Activated CD4-positive, alpha-beta memory T cell treated with anti-CD3 and anti-CD28 coated beads for 36 hours (primary cell): ENCODE measurements at regions of chr1 and their contacts with region 1.

Region 1: GRCh38 chr1:147640553-147641165 is 29.7 kb downstream of the ACP6 start:
- DNase-seq: peak; percentile 87
- H3K4me3 Mint-ChIP-seq: no peak overlapping the region
- H3K27ac Mint-ChIP-seq: no peak overlapping the region
- H3K4me1 Mint-ChIP-seq: peaks cover 26% of the 10 kb centered on the region
- H3K27me3 Mint-ChIP-seq: no peaks in the 10 kb centered on the region

Region 2: GRCh38 chr1:147287133-147287865 is 353.4 kb before region 1 on chr1:
- CTCF ChIA-PET with region 1: no interaction called
- POLR2A ChIA-PET with region 1: no interaction called
- intact Hi-C with region 1: loop called (anchors 10 kb)
- DNase-seq: no peak
- H3K4me3 Mint-ChIP-seq: no peak overlapping the region
- H3K27ac Mint-ChIP-seq: no peak overlapping the region
- H3K4me1 Mint-ChIP-seq: peaks cover 10% of the 10 kb centered on the region
- H3K27me3 Mint-ChIP-seq: no peaks in the 10 kb centered on the region

Region 3: DNA sequence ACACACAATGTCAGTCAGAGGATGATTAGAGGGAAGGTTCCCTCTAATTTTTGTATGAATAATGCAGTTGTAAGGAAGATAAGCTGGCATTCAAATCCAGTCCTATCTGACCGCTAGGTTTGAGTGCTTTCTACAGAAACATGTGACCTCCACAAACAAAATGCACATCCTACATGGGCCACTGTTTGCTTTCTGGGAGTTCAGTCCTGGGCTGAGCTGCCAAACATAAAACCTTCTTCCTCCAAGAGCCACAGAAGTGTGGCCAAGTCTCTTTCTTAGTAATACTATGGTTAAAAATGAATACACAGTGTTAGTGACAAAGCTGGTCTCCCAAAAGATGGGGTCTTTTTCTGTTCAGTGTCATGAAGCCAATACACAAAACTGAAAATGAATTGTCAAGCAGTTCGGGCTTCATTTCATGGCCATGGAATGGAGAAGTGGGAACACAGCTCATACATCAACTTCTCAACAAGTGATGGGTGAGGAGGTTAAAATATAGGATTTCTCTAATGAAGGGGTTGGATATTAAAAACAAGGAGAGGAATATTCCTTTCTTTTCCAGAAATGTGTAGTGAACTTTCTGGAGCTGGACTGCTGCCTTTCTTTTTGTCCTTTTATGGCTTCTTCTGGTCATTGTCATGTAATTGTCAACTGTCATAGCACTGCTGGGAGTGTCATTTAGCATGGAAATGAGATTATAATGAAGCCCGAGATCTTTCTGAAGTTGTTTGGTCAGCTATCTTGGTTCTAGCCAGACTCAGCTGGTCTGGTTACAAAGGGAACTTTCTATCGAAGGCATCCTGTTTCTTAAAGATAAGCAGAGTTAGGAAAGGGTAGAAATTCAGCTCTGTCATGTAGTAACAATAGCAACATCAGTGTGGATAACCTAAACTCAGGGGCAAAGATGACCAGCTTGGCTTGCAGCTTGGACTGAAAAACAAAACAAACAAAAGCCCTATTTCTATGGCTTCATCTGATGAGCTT is 263.1 kb before region 1 on chr1:
- CTCF ChIA-PET with region 1: no interaction called
- POLR2A ChIA-PET with region 1: no interaction called
- intact Hi-C with region 1: no loop called
- DNase-seq: no peak
- H3K4me3 Mint-ChIP-seq: no peak overlapping the region
- H3K27ac Mint-ChIP-seq: no peak overlapping the region
- H3K4me1 Mint-ChIP-seq: no peaks in the 10 kb centered on the region
- H3K27me3 Mint-ChIP-seq: peaks cover 15% of the 10 kb centered on the region

Region 4: DNA sequence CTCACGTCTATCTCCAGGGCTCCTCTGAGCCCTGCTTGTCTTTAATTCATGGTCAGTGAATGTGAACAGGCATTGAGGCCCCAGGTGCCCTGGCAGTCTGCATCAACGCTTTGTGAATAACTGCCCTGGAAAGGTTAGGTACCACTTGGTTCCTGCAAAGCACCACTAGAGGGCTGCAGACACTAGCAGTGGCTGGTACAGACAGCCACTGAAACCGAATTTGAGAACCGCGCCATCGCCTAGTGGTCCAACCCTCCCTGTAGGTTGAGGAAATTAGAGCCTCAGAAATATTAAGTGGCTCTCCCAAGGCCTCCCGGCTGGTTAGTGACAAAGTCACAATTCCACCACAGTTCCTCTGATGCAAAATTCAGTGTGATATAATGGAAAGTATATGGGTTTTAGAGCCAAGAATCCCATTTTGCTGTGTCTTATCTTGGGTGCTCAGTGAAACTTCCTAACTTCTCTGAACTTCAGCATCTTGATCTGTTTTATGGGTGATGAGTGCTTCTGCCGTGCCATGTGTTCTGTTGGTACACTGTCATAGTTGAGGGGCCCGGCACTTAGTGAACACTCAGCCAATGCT is 145.6 kb before region 1 on chr1:
- CTCF ChIA-PET with region 1: interaction called, 14 read pairs
- POLR2A ChIA-PET with region 1: no interaction called
- intact Hi-C with region 1: loop called (anchors 1 kb)
- DNase-seq: peak; percentile 76
- H3K4me3 Mint-ChIP-seq: no peak overlapping the region
- H3K27ac Mint-ChIP-seq: no peak overlapping the region
- H3K4me1 Mint-ChIP-seq: no peaks in the 10 kb centered on the region
- H3K27me3 Mint-ChIP-seq: no peaks in the 10 kb centered on the region

Region 5: GRCh38 chr1:147515046-147515869 is 125.4 kb before region 1 on chr1:
- CTCF ChIA-PET with region 1: interaction called, 41 read pairs
- POLR2A ChIA-PET with region 1: no interaction called
- intact Hi-C with region 1: loop called (anchors 1 kb)
- DNase-seq: no peak
- H3K4me3 Mint-ChIP-seq: no peak overlapping the region
- H3K27ac Mint-ChIP-seq: no peak overlapping the region
- H3K4me1 Mint-ChIP-seq: peaks cover 15% of the 10 kb centered on the region
- H3K27me3 Mint-ChIP-seq: peaks cover 2% of the 10 kb centered on the region

Region 6: DNA sequence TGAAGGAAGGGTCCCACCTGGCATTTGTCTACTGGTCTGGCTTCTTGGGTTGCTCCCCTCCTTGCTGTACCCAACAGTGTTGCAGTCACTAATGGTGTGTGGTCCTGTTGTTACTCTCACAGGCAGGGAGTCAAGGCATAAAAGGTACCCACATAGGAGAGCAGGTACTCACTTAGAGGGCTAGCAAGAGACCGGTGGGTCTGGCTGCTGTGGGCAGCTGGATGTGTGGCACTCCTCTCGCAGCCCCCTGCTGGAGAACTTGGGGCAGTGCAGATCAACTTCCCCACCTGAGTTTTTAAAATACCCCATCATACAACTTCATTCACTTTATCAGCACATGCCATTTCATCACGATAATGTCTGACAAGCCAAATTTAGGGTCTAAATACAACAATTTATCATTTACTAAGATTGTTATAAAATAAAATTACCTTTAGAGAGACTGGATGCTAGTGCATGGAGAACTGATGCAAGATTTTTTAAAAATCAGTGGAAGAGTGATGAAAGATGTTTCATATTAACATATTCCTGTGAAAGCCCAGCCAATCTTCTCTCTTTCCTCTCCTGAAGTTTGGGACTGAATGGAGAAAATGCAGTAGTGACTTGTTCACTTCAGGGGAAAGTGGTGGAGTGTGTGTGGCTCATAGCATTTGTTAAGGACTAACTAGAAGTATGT is 13.1 kb before region 1 on chr1:
- CTCF ChIA-PET with region 1: interaction called, 15 read pairs
- POLR2A ChIA-PET with region 1: no interaction called
- intact Hi-C with region 1: no loop called
- DNase-seq: peak; percentile 57
- H3K4me3 Mint-ChIP-seq: no peak overlapping the region
- H3K27ac Mint-ChIP-seq: no peak overlapping the region
- H3K4me1 Mint-ChIP-seq: peaks cover 24% of the 10 kb centered on the region
- H3K27me3 Mint-ChIP-seq: no peaks in the 10 kb centered on the region

Region 7: GRCh38 chr1:147670317-147671041 is 29.8 kb after region 1 on chr1 and contains the start of gene ACP6:
- CTCF ChIA-PET with region 1: interaction called, 13 read pairs
- POLR2A ChIA-PET with region 1: interaction called, 3 read pairs
- intact Hi-C with region 1: loop called (anchors 2 kb)
- DNase-seq: peak; percentile 94
- H3K4me3 Mint-ChIP-seq: peak within 1 kb of the TSS; percentile 89
- H3K27ac Mint-ChIP-seq: peak within 1 kb of the TSS; percentile 84
- H3K4me1 Mint-ChIP-seq: peaks cover 18% of the 10 kb centered on the region
- H3K27me3 Mint-ChIP-seq: peaks cover 2% of the 10 kb centered on the region
- total RNA-seq, gene ACP6: 11.6 to 12.5 TPM

Region 8: GRCh38 chr1:147700042-147701006 is 59.7 kb after region 1 on chr1:
- CTCF ChIA-PET with region 1: interaction called, 6 read pairs
- POLR2A ChIA-PET with region 1: no interaction called
- intact Hi-C with region 1: loop called (anchors 2 kb)
- DNase-seq: peak; percentile 69
- H3K4me3 Mint-ChIP-seq: no peak overlapping the region
- H3K27ac Mint-ChIP-seq: peak overlapping the region; percentile 0
- H3K4me1 Mint-ChIP-seq: peaks cover 7% of the 10 kb centered on the region
- H3K27me3 Mint-ChIP-seq: peaks cover 4% of the 10 kb centered on the region